ENCODE measurements at regions of chr6 and their contacts with region 1.

Region 1: GRCh38 chr6:32413427-32414047 is 6.6 kb upstream of the BTNL2 start:
- DNase-seq: peak; percentile 79
- H3K4me3 ChIP-seq: no peak overlapping the region
- H3K27ac ChIP-seq: no peak overlapping the region
- H3K4me1 ChIP-seq: no peaks in the 10 kb centered on the region
- H3K27me3 ChIP-seq: peaks cover 44% of the 10 kb centered on the region
- CTCF ChIP-seq: peak; percentile 93

Region 2: GRCh38 chr6:32244946-32245398 is 168.6 kb before region 1 on chr6:
- CTCF ChIA-PET with region 1: no interaction called
- POLR2A ChIA-PET with region 1: no interaction called
- intact Hi-C with region 1: loop called (anchors 5 kb)
- DNase-seq: peak; percentile 87
- H3K4me3 ChIP-seq: no peak overlapping the region
- H3K27ac ChIP-seq: no peak overlapping the region
- H3K4me1 ChIP-seq: peaks cover 6% of the 10 kb centered on the region
- H3K27me3 ChIP-seq: no peaks in the 10 kb centered on the region
- CTCF ChIP-seq: peak; percentile 97

Region 3: GRCh38 chr6:32255199-32256153 is 158.1 kb before region 1 on chr6:
- CTCF ChIA-PET with region 1: interaction called, 11 read pairs
- POLR2A ChIA-PET with region 1: no interaction called
- intact Hi-C with region 1: no loop called
- DNase-seq: peak; percentile 93
- H3K4me3 ChIP-seq: peak overlapping the region; percentile 33
- H3K27ac ChIP-seq: peak overlapping the region; percentile 69
- H3K4me1 ChIP-seq: peaks cover 7% of the 10 kb centered on the region
- H3K27me3 ChIP-seq: no peaks in the 10 kb centered on the region
- CTCF ChIP-seq: peak; percentile 67

Region 4: GRCh38 chr6:32432050-32432450 is 18.5 kb after region 1 on chr6:
- CTCF ChIA-PET with region 1: no interaction called
- POLR2A ChIA-PET with region 1: no interaction called
- intact Hi-C with region 1: no loop called
- DNase-seq: peak; percentile 38
- H3K4me3 ChIP-seq: no peak overlapping the region
- H3K27ac ChIP-seq: no peak overlapping the region
- H3K4me1 ChIP-seq: no peaks in the 10 kb centered on the region
- H3K27me3 ChIP-seq: peaks cover 16% of the 10 kb centered on the region
- CTCF ChIP-seq: peak; percentile 57; the same call in 1 of the 2 replicates

Region 5: DNA sequence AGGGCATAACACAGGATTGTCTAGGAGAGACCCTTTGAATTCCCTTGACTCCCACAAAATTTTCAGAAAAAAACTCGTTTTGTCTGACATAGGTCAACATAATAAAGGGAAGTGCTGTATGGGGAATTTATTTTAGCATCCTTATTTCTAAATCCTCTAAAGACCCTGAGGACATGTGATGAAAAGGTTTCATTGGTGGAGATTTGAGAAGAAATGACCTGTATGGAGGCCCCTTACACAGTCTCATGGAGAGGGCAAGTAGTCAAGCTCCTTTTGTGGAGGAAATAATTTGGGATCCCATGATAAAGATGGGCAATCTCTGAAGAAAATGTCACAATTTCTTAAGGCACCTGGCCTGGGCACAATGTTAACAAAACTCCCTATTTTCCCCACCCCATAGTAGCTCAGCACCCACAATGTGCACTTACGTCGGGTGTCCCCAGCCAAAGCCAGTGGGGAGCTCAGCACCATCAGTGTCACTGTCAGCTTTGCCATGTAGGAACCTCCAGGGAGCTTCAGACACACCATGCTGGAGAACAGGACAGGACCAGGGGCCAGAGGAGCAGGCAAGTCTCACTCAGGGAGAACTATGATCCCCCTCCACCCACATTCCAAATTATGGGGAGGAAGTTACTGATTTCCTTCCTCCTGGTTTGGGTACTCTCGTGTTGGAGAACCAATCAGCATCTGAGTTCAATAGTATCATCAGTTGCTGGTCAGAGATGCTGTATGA is 116.3 kb after region 1 on chr6 and contains the start of gene HLA-DRB5:
- CTCF ChIA-PET with region 1: no interaction called
- POLR2A ChIA-PET with region 1: no interaction called
- intact Hi-C with region 1: no loop called
- DNase-seq: no peak
- H3K4me3 ChIP-seq: no peak within 1 kb of the TSS
- H3K27ac ChIP-seq: no peak within 1 kb of the TSS
- H3K4me1 ChIP-seq: no peaks in the 10 kb centered on the region
- H3K27me3 ChIP-seq: peaks cover 5% of the 10 kb centered on the region
- CTCF ChIP-seq: no peak
- total RNA-seq, gene HLA-DRB5: not detected in 2 replicates

Region 6: GRCh38 chr6:32700391-32701040 is 287.0 kb after region 1 on chr6:
- CTCF ChIA-PET with region 1: interaction called, 3 read pairs
- POLR2A ChIA-PET with region 1: no interaction called
- intact Hi-C with region 1: loop called (anchors 2 kb)
- DNase-seq: peak; percentile 69
- H3K4me3 ChIP-seq: no peak overlapping the region
- H3K27ac ChIP-seq: no peak overlapping the region
- H3K4me1 ChIP-seq: no peaks in the 10 kb centered on the region
- H3K27me3 ChIP-seq: peaks cover 43% of the 10 kb centered on the region
- CTCF ChIP-seq: peak; percentile 69

Region 7: GRCh38 chr6:32785781-32786533 is 372.4 kb after region 1 on chr6:
- CTCF ChIA-PET with region 1: interaction called, 9 read pairs
- POLR2A ChIA-PET with region 1: no interaction called
- intact Hi-C with region 1: loop called (anchors 5 kb)
- DNase-seq: peak; percentile 77
- H3K4me3 ChIP-seq: no peak overlapping the region
- H3K27ac ChIP-seq: no peak overlapping the region
- H3K4me1 ChIP-seq: no peaks in the 10 kb centered on the region
- H3K27me3 ChIP-seq: peaks cover 48% of the 10 kb centered on the region
- CTCF ChIP-seq: peak; percentile 76

Region 8: GRCh38 chr6:32796848-32797776 is 383.6 kb after region 1 on chr6:
- CTCF ChIA-PET with region 1: no interaction called
- POLR2A ChIA-PET with region 1: no interaction called
- intact Hi-C with region 1: loop called (anchors 2 kb)
- DNase-seq: peak; percentile 78
- H3K4me3 ChIP-seq: peak overlapping the region; percentile 29
- H3K27ac ChIP-seq: no peak overlapping the region
- H3K4me1 ChIP-seq: no peaks in the 10 kb centered on the region
- H3K27me3 ChIP-seq: peaks cover 77% of the 10 kb centered on the region
- CTCF ChIP-seq: peak; percentile 87

Region 9: GRCh38 chr6:32868257-32868788 is 454.8 kb after region 1 on chr6:
- CTCF ChIA-PET with region 1: interaction called, 6 read pairs
- POLR2A ChIA-PET with region 1: no interaction called
- intact Hi-C with region 1: loop called (anchors 10 kb)
- DNase-seq: peak; percentile 84
- H3K4me3 ChIP-seq: no peak overlapping the region
- H3K27ac ChIP-seq: no peak overlapping the region
- H3K4me1 ChIP-seq: no peaks in the 10 kb centered on the region
- H3K27me3 ChIP-seq: peaks cover 50% of the 10 kb centered on the region
- CTCF ChIP-seq: peak; percentile 91